ENCODE measurements at regions of chr19 and their contacts with region 1.

Region 1: DNA sequence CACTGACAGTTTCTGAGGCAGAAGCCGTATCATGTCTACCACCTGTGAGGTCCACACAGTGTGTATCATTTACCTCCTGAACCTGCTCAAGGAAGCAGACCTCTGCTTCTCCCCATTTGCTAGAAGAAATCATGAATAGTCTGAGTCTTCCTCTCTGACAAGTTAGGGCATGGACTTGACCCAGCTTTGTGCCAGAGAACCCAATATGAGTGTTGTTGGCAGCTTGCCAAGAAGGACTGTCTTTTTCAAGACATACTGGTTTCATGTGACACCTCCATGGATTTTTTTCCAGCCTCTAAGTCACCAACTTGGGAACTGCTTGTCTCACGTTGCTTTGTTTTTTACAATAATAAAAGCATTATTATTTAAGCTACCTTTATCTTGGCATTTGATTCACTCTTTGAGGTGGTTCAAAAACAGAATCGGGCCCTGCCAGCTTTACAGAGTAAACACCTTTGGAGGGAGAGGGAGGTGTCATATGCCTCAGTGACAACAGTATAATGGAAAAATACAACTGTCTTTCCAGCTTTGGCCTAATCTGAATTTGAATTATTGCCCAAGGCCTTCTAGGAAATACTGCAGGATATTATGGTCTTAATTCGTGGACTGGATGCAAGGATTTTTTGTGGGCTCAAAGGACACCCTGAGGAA is 9.6 kb downstream of the ZNF211 start:
- DNase-seq: no peak
- ATAC-seq: no peak
- H3K4me3 ChIP-seq: no peak overlapping the region
- H3K27ac ChIP-seq: no peak overlapping the region
- H3K4me1 ChIP-seq: peaks cover 0 to 13% (median 0%) of the 10 kb centered on the region in 9 donors
- H3K27me3 ChIP-seq: no peaks in the 10 kb centered on the region
- CTCF ChIP-seq: no peak

Region 2: GRCh38 chr19:57675881-57676280 is 33.4 kb after region 1 on chr19:
- intact Hi-C with region 1: loop called in 1 of 10 experiments (anchors 5 kb)
- DNase-seq: no peak
- ATAC-seq: no peak
- H3K4me3 ChIP-seq: no peak overlapping the region
- H3K27ac ChIP-seq: no peak overlapping the region
- H3K4me1 ChIP-seq: no peaks in the 10 kb centered on the region
- H3K27me3 ChIP-seq: no peaks in the 10 kb centered on the region
- CTCF ChIP-seq: no peak

Measured in heart right ventricle (tissue), 16 donors.